Caco-2 (cell line): ENCODE measurements at regions of chr14 and their contacts with region 1.

Region 1: GRCh38 chr14:20343092-20343861 is at the start of gene PARP2:
- DNase-seq: peak; percentile 99 to 100
- H3K4me3 ChIP-seq: peak within 1 kb of the TSS; percentile 78
- H3K4me3 Mint-ChIP-seq: peak within 1 kb of the TSS; percentile 92
- H3K27ac Mint-ChIP-seq: peak within 1 kb of the TSS; percentile 98
- H3K4me1 ChIP-seq: no peaks in the 10 kb centered on the region
- H3K4me1 Mint-ChIP-seq: peaks cover 11% of the 10 kb centered on the region
- H3K27me3 ChIP-seq: no peaks in the 10 kb centered on the region
- H3K27me3 Mint-ChIP-seq: no peaks in the 10 kb centered on the region
- CTCF ChIP-seq: no peak
- total RNA-seq, gene PARP2: 41.1 and 49.4 TPM in 2 replicates

Region 2: DNA sequence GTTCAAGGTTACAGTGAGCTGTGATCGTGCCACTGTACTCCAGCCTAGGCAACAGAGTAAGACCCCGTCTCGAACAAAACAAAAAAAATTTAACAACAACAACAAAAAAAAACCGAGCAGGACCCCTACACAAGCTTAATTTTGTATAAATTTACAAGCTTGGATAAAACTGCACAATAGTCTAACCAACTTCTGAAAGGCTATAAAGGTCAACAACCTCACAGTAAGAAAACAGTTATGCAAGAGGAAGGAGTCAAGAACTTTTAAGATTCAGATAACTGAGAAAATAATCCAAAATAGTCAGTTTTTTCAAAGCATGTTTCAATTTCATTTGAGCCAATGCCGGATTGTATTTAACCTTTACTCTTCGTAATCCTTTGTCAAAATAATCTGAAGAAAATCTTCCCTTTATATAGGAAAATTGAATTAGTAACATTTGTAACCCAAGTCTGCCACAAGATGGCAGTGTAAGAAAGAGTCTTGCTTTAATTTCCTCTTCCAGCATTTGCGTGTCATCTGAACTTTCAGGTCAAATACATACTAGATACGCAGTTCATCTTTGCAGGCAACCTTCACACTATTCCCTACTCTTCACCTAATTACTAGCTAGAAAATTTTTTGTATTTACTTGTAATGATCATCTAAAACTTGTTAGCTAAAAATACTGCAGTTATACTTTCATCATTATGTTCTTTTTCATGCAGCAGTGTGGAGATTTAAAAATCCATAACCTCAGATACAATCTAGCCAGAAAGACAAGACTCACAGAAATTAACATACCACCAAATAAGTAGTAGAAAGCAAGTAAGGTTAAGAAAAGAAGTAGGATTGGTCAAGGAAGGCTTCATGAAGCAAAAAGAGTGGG is 16.0 kb before region 1 on chr14:
- CTCF ChIA-PET with region 1: interaction called, 7 read pairs
- POLR2A ChIA-PET with region 1: interaction called, 52 read pairs
- intact Hi-C with region 1: loop called (anchors 2 kb)
- DNase-seq: peak in 1 of 2 experiments; percentile 62
- H3K4me3 ChIP-seq: no peak overlapping the region
- H3K4me3 Mint-ChIP-seq: no peak overlapping the region
- H3K27ac Mint-ChIP-seq: no peak overlapping the region
- H3K4me1 ChIP-seq: peaks cover 10% of the 10 kb centered on the region; the same call in 1 of the 2 replicates
- H3K4me1 Mint-ChIP-seq: peaks cover 22% of the 10 kb centered on the region
- H3K27me3 ChIP-seq: no peaks in the 10 kb centered on the region
- H3K27me3 Mint-ChIP-seq: no peaks in the 10 kb centered on the region
- CTCF ChIP-seq: peak; percentile 39 to 59

Region 3: DNA sequence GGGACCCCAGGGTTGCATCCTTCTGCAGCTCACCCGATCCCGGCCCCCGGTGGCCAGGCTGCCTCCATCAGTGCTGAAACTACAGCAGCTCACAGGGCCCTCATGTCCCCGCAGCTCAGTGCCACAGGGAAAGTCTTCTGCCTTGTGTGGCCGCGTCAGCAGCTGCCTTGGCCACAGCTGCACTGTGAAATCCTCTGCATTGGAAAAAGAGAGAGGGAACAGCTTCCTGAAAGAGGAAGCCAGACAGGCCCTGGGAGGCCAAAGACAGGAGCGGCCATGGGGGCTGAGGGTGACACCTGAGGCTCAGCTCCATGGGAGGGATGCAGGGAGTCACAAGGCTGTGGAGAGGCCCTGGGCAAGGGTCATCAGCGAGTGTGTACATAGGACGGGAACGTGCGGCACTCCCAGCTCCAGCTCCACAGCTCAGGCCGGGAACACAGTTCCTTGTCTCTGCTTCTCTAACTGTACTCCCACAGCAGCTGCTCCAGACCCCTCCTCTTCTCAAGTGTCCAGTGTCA is 32.9 kb after region 1 on chr14:
- CTCF ChIA-PET with region 1: no interaction called
- POLR2A ChIA-PET with region 1: interaction called, 16 read pairs
- intact Hi-C with region 1: loop called (anchors 1 kb)
- DNase-seq: peak; percentile 66 to 81
- H3K4me3 ChIP-seq: no peak overlapping the region
- H3K4me3 Mint-ChIP-seq: peak overlapping the region; percentile 12
- H3K27ac Mint-ChIP-seq: peak overlapping the region; percentile 89
- H3K4me1 ChIP-seq: peaks cover 13% of the 10 kb centered on the region
- H3K4me1 Mint-ChIP-seq: peaks cover 14% of the 10 kb centered on the region
- H3K27me3 ChIP-seq: no peaks in the 10 kb centered on the region
- H3K27me3 Mint-ChIP-seq: no peaks in the 10 kb centered on the region
- CTCF ChIP-seq: no peak

Region 4: GRCh38 chr14:20461274-20462001 is 118.2 kb after region 1 on chr14 and contains the start of gene PIP4P1:
- CTCF ChIA-PET with region 1: interaction called, 10 read pairs
- POLR2A ChIA-PET with region 1: interaction called, 60 read pairs
- intact Hi-C with region 1: no loop called
- DNase-seq: peak; percentile 99 to 100
- H3K4me3 ChIP-seq: peak within 1 kb of the TSS; percentile 93
- H3K4me3 Mint-ChIP-seq: peak within 1 kb of the TSS; percentile 83
- H3K27ac Mint-ChIP-seq: peak within 1 kb of the TSS; percentile 96
- H3K4me1 ChIP-seq: peaks cover 16% of the 10 kb centered on the region
- H3K4me1 Mint-ChIP-seq: peaks cover 17% of the 10 kb centered on the region
- H3K27me3 ChIP-seq: no peaks in the 10 kb centered on the region
- H3K27me3 Mint-ChIP-seq: no peaks in the 10 kb centered on the region
- CTCF ChIP-seq: no peak
- total RNA-seq, gene PIP4P1: 39.6 and 46.2 TPM in 2 replicates

Region 5: GRCh38 chr14:20613094-20614037 is 270.1 kb after region 1 on chr14:
- CTCF ChIA-PET with region 1: interaction called, 10 read pairs
- POLR2A ChIA-PET with region 1: interaction called, 9 read pairs
- intact Hi-C with region 1: loop called (anchors 1 kb)
- DNase-seq: peak; percentile 91 to 96
- H3K4me3 ChIP-seq: peak overlapping the region; percentile 66
- H3K4me3 Mint-ChIP-seq: no peak overlapping the region
- H3K27ac Mint-ChIP-seq: no peak overlapping the region
- H3K4me1 ChIP-seq: 0 out of 2 replicates have a peak, but pooled peaks cover 4% of the 10 kb centered on the region
- H3K4me1 Mint-ChIP-seq: peaks cover 22% of the 10 kb centered on the region
- H3K27me3 ChIP-seq: no peaks in the 10 kb centered on the region
- H3K27me3 Mint-ChIP-seq: no peaks in the 10 kb centered on the region
- CTCF ChIP-seq: peak; percentile 64 to 83